B cell (primary cell): ENCODE measurements at regions of chr14 and their contacts with region 1.

Region 1: DNA sequence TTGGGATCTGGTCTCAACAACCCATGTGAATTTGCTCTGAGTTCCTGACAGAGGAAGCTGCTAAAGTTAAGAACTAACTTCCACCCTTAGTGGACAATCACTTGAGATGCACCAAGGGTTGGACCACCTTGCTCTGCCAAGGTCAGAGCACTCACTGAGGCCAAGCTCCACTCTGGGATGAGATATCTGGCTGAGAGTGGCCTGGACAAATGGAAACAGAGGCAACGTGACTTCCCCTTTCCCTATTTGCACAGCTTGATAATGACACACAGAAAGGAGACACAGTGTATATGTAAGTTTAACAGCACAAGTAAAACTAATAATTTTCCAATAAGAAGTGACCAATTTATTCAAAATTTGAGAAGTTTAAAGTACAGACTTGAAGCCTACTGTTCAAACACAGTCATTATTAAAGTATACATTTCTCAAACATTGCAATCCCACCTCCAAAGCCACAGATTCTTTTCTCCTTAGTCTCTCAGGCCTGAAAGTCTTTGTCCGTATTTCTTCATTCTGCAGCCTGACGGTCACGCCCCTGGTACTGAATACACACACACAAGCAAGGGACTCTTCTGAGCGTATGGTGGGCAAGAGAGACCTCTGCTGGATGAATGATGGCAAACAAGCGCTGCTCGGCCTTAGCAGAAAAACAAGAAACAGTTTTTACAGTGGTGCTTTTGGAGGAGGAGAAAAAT is 28.6 kb downstream of the TMEM30B start:
- DNase-seq: peak; percentile 74
- ATAC-seq: peak; percentile 88
- H3K4me3 ChIP-seq: no peak overlapping the region
- H3K4me3 Mint-ChIP-seq: no peak overlapping the region
- H3K27ac ChIP-seq: no peak overlapping the region
- H3K27ac Mint-ChIP-seq: no peak overlapping the region
- H3K4me1 ChIP-seq: peaks cover 3 to 7% of the 10 kb centered on the region in 2 donors
- H3K4me1 Mint-ChIP-seq: peaks cover 10% of the 10 kb centered on the region
- H3K27me3 ChIP-seq: peaks cover 0 to 5% (median 1%) of the 10 kb centered on the region in 4 experiments
- H3K27me3 Mint-ChIP-seq: peaks cover 22% of the 10 kb centered on the region
- CTCF ChIP-seq: peak; percentile 86

Region 2: GRCh38 chr14:60151715-60152114 is 1100.8 kb before region 1 on chr14:
- CTCF ChIA-PET with region 1: no interaction called
- POLR2A ChIA-PET with region 1: no interaction called
- intact Hi-C with region 1: loop called (anchors 5 kb)
- DNase-seq: peak; percentile 73
- ATAC-seq: peak; percentile 97
- H3K4me3 ChIP-seq: no peak overlapping the region
- H3K4me3 Mint-ChIP-seq: no peak overlapping the region
- H3K27ac ChIP-seq: peak overlapping the region; percentile 50 to 86
- H3K27ac Mint-ChIP-seq: peak overlapping the region; percentile 85
- H3K4me1 ChIP-seq: peaks cover 12% of the 10 kb centered on the region in 2 donors
- H3K4me1 Mint-ChIP-seq: peaks cover 24% of the 10 kb centered on the region
- H3K27me3 ChIP-seq: no peaks in the 10 kb centered on the region
- H3K27me3 Mint-ChIP-seq: no peaks in the 10 kb centered on the region
- CTCF ChIP-seq: no peak

Region 3: DNA sequence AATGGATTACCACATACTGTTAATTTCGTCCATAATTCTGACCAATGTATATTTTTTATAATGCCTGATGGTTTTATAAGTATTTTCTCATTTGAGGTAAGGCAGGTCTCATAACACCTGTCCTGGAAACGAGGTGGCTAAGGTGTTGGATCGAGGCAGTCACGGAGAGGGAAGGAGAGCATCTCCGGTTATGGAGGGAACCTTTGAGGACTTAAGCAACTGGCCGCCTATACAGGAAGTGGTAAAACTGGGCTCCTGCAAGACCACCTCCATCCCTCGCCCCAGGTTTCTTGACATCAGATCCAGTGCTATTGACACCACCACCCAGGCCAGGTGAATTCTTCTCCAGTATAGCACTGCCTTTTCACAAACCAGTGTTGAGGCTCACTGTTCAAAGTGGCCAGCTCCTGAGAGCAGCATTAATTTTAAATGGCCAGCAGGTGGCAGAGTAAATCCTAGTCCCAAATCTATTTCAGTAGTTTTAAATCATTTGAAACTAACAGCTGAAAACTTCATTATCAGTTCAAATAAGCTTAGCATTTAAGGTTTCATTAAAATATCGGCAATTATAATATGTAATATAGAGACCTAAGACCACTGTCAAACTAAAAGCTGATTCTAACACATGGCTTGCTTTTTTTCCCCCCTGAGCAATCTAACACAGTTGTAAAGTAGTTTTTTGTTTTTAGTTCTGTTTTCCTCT is 902.7 kb before region 1 on chr14:
- CTCF ChIA-PET with region 1: interaction called, 62 read pairs
- POLR2A ChIA-PET with region 1: no interaction called
- intact Hi-C with region 1: no loop called
- DNase-seq: peak; percentile 55
- ATAC-seq: peak; percentile 36
- H3K4me3 ChIP-seq: no peak overlapping the region
- H3K4me3 Mint-ChIP-seq: no peak overlapping the region
- H3K27ac ChIP-seq: no peak overlapping the region
- H3K27ac Mint-ChIP-seq: no peak overlapping the region
- H3K4me1 ChIP-seq: no peaks in the 10 kb centered on the region
- H3K4me1 Mint-ChIP-seq: no peaks in the 10 kb centered on the region
- H3K27me3 ChIP-seq: peaks cover 0 to 13% (median 2%) of the 10 kb centered on the region in 4 experiments
- H3K27me3 Mint-ChIP-seq: peaks cover 9% of the 10 kb centered on the region
- CTCF ChIP-seq: peak; percentile 75

Region 4: DNA sequence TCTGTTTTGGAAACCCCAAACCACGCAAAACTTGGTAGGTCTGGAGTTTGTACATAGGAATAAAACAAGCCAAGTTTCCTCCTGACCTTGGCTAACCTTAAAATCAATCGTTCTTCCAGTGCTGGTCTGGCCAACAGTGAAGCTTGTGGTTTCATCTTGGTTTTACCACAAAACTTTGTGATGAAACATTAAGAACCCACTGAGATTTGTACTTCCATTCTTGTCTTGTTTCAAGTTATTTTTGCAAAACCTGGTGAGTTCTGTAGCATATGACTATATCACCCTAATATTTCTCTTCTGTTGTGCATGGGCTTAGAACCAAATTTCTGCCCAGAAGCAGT is 629.6 kb before region 1 on chr14:
- CTCF ChIA-PET with region 1: interaction called, 82 read pairs
- POLR2A ChIA-PET with region 1: no interaction called
- intact Hi-C with region 1: no loop called
- DNase-seq: no peak
- ATAC-seq: no peak
- H3K4me3 ChIP-seq: no peak overlapping the region
- H3K4me3 Mint-ChIP-seq: no peak overlapping the region
- H3K27ac ChIP-seq: no peak overlapping the region
- H3K27ac Mint-ChIP-seq: no peak overlapping the region
- H3K4me1 ChIP-seq: no peaks in the 10 kb centered on the region
- H3K4me1 Mint-ChIP-seq: peaks cover 5% of the 10 kb centered on the region
- H3K27me3 ChIP-seq: peaks cover 0 to 4% (median 2%) of the 10 kb centered on the region in 4 experiments
- H3K27me3 Mint-ChIP-seq: peaks cover 28% of the 10 kb centered on the region
- CTCF ChIP-seq: no peak